ENCODE measurements at regions of chr12 and their contacts with region 1.

Region 1: GRCh38 chr12:121230538-121230907 is 20.6 kb downstream of the P2RX4 start:
- DNase-seq: no peak
- ATAC-seq: no peak
- H3K4me3 Mint-ChIP-seq: no peak overlapping the region
- H3K27ac Mint-ChIP-seq: no peak overlapping the region
- H3K4me1 Mint-ChIP-seq: peaks cover 38% of the 10 kb centered on the region
- H3K27me3 Mint-ChIP-seq: no peaks in the 10 kb centered on the region

Region 2: GRCh38 chr12:121170611-121171260 is 59.8 kb before region 1 on chr12:
- CTCF ChIA-PET with region 1: no interaction called
- POLR2A ChIA-PET with region 1: no interaction called
- DNase-seq: no peak
- ATAC-seq: no peak
- H3K4me3 Mint-ChIP-seq: no peak overlapping the region
- H3K27ac Mint-ChIP-seq: no peak overlapping the region
- H3K4me1 Mint-ChIP-seq: peaks cover 5% of the 10 kb centered on the region
- H3K27me3 Mint-ChIP-seq: no peaks in the 10 kb centered on the region

Region 3: GRCh38 chr12:121196902-121197301 is 33.6 kb before region 1 on chr12:
- CTCF ChIA-PET with region 1: no interaction called
- POLR2A ChIA-PET with region 1: no interaction called
- DNase-seq: peak; percentile 29
- ATAC-seq: peak; percentile 64
- H3K4me3 Mint-ChIP-seq: no peak overlapping the region
- H3K27ac Mint-ChIP-seq: peak overlapping the region; percentile 54
- H3K4me1 Mint-ChIP-seq: peaks cover 16% of the 10 kb centered on the region
- H3K27me3 Mint-ChIP-seq: peaks cover 1% of the 10 kb centered on the region

Region 4: DNA sequence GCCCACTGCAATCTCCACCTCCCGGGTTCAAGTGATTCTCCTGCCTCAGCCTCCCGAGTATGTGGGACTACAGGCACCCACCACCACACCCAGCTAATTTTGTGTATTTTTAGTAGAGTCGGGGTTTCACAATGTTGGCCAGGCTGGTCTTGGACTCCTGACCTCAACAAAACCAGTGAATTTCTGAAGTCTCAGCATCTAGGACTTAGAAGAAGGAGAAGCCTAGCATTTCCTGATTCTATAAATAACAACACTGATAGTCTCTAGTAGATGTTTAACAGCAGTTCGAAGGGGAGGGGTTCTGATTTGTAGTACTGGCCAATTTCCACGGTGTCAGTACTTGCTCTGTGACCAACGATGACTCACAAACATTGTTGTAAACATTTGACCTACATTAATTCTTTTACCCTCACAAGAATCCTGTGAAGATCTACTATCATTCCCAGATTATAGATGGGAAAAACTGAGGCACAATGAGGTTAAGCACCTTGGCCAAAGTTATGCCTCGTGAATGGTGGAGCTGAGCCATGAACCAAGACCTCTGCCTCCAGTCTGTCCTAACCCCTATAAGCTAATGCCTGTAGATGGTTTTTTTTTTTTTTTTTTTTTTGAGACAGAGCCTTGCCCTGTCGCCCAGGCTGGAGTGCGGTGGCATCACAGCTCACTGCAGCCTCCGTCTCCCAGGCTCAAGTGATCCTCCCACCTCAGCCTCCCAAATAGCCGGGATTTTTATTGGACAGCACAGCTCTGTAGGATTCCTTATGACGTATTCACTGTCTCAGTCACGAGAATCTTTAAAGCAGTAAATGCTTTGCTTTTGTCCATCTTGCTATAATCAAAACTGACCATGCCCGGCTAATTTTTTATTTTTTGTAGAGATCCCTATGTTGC is 15.4 kb before region 1 on chr12:
- CTCF ChIA-PET with region 1: interaction called, 19 read pairs
- POLR2A ChIA-PET with region 1: interaction called, 5 read pairs
- DNase-seq: no peak
- ATAC-seq: no peak
- H3K4me3 Mint-ChIP-seq: peak overlapping the region; percentile 4
- H3K27ac Mint-ChIP-seq: peak overlapping the region; percentile 67
- H3K4me1 Mint-ChIP-seq: peaks cover 54% of the 10 kb centered on the region
- H3K27me3 Mint-ChIP-seq: no peaks in the 10 kb centered on the region

Region 5: GRCh38 chr12:121240484-121241101 is 10.1 kb after region 1 on chr12:
- CTCF ChIA-PET with region 1: interaction called, 45 read pairs
- POLR2A ChIA-PET with region 1: interaction called, 5 read pairs
- DNase-seq: peak; percentile 89
- ATAC-seq: peak; percentile 90
- H3K4me3 Mint-ChIP-seq: peak overlapping the region; percentile 68
- H3K27ac Mint-ChIP-seq: peak overlapping the region; percentile 96
- H3K4me1 Mint-ChIP-seq: peaks cover 44% of the 10 kb centered on the region
- H3K27me3 Mint-ChIP-seq: no peaks in the 10 kb centered on the region